OCI-LY7 (cell line): ENCODE measurements at regions of chr12 and their contacts with region 1.

Region 1: DNA sequence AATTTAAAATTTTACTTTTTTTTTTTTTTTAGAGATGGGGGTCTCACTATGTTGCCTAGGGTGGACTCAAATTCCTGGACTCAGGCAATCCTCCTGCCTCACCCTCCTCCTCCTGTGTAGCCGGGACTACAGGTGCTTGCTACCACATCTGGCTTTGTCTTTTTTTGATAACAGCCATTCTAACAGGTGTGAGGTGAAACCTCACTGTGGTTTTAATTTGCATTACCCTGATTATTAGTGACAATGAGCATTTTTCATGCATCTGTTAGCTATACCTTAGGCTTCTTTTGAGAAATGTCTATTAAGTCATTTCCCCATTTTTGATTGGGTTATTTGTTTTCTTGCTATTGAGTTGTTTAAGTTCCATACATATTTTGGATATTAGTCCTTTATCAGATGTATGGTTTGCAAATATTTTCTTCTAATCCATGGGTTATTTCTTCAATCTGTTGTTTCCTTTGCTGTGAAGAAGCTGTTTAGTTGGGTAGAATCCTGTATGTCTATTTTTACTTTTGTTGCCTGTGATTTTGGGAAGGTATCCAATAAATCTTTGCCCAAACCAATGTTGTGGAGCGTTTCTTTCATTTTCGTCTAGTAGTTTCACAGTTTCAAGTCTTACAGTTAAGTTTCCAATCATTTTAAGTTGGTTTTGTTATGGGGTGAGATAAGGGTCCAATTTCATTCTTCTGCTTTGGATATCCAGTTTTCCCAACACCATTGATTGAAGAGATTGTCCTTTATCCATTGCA is 86.1 kb downstream of the MYF5 start:
- DNase-seq: peak; percentile 45
- H3K4me3 ChIP-seq: no peak overlapping the region
- H3K27ac ChIP-seq: peak overlapping the region; percentile 36
- H3K4me1 ChIP-seq: peaks cover 21% of the 10 kb centered on the region
- CTCF ChIP-seq: no peak

Region 2: GRCh38 chr12:80412369-80412953 is 390.4 kb before region 1 on chr12:
- CTCF ChIA-PET with region 1: no interaction called
- POLR2A ChIA-PET with region 1: no interaction called
- intact Hi-C with region 1: no loop called
- DNase-seq: peak; percentile 67
- H3K4me3 ChIP-seq: no peak overlapping the region
- H3K27ac ChIP-seq: no peak overlapping the region
- H3K4me1 ChIP-seq: no peaks in the 10 kb centered on the region
- CTCF ChIP-seq: peak; percentile 96

Region 3: DNA sequence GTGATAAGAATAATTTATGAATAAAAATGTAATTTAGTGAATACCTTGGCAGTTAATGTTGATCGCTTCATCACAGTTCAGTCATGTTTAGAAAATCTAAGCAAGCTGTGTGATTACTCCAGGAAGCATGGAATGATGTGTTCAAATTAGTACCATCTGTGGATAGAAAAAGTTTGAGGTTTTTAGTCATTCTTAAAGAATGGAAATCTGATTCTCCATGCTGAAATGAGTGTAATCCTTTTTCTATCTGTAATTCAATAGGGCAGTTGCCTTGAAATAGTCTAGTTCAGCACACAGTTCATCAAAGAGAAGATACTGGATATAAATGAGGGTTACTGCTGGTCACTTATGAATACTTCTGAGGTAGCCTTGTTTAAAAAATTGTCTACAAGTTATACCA is 222.6 kb before region 1 on chr12:
- CTCF ChIA-PET with region 1: no interaction called
- POLR2A ChIA-PET with region 1: no interaction called
- intact Hi-C with region 1: no loop called
- DNase-seq: no peak
- H3K4me3 ChIP-seq: no peak overlapping the region
- H3K27ac ChIP-seq: no peak overlapping the region
- H3K4me1 ChIP-seq: no peaks in the 10 kb centered on the region
- CTCF ChIP-seq: no peak

Region 4: DNA sequence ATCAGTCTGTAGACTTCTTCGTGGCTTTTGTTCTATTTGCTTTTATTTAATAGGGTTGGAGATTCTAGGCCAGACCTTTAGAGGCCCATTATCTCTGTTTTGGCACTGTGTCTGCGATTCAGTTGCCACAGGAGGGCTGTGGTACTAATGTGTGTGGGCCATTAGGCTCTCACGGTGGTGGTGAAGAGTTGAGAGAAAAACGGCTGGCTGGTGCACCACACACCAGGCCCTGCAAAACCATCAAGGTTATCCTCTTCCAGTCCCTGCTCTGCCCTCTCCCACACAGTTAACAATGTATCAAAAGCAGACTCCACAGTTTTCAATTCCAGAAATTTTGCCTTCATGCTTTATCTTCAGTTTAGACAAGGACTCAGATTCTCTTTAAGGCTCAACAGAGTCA is 11.6 kb after region 1 on chr12:
- CTCF ChIA-PET with region 1: no interaction called
- POLR2A ChIA-PET with region 1: interaction called, 20 read pairs
- intact Hi-C with region 1: no loop called
- DNase-seq: no peak
- H3K4me3 ChIP-seq: no peak overlapping the region
- H3K27ac ChIP-seq: peak overlapping the region; percentile 11
- H3K4me1 ChIP-seq: peaks cover 50% of the 10 kb centered on the region
- CTCF ChIP-seq: no peak

Region 5: DNA sequence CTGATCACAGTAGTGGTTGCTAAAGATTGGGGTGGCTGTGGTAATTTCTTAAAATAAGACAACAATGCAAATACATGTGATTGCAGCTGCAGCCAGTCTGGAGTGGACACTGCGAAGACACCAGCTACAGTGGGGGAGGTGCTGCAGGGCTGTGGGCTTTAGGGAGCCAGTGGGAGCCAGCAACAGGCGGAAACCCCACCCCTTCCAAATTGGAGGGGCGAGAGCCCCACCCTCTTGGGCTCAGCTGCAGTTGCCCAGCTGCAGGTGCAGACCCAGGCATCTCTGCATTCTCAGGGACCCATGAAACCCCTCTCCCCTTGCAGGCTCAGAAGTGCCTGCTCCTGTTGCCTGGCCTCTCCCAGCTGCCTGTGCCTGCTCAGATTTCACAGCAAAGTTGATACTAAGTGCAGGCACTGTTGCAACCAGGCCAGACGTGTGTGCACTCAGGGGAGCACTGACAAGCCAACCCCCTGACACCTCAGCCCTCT is 18.7 kb after region 1 on chr12:
- CTCF ChIA-PET with region 1: no interaction called
- POLR2A ChIA-PET with region 1: interaction called, 20 read pairs
- intact Hi-C with region 1: loop called (anchors 2 kb)
- DNase-seq: peak; percentile 75
- H3K4me3 ChIP-seq: peak overlapping the region; percentile 18
- H3K27ac ChIP-seq: peak overlapping the region; percentile 89
- H3K4me1 ChIP-seq: peaks cover 46% of the 10 kb centered on the region
- CTCF ChIP-seq: no peak